Common myeloid progenitor, CD34-positive (primary cell): ENCODE measurements at regions of chr3 and their contacts with region 1.

Region 1: GRCh38 chr3:37024092-37024491 is 30.8 kb downstream of the MLH1 start:
- DNase-seq: peak; percentile 19 to 58 (median 49)
- H3K4me3 ChIP-seq: no peak overlapping the region
- H3K27ac ChIP-seq: no peak overlapping the region
- H3K4me1 ChIP-seq: peaks cover 0 to 9% (median 0%) of the 10 kb centered on the region in 4 experiments
- H3K27me3 ChIP-seq: no peaks in the 10 kb centered on the region

Region 2: DNA sequence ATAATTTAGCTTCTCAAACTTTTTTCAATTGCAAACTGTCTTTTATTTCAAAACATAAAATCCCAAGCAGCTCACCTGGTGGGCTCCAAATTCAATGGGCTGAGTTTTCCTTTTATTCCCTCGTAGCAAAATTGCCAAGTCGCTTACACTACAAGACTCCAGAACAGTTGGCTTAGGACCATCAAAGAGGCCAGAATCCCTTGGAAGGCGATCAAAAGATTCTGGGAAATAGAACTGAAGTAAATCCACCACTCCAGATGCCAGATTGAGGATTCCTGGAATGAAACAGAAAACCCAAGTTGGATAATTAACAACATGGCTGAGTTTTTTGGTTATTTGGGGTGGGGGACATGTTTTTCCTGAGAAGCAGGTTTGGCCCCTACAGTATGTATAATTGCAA is 172.0 kb before region 1 on chr3:
- CTCF ChIA-PET with region 1: no interaction called
- POLR2A ChIA-PET with region 1: no interaction called
- DNase-seq: no peak
- H3K4me3 ChIP-seq: no peak overlapping the region
- H3K27ac ChIP-seq: no peak overlapping the region
- H3K4me1 ChIP-seq: no peaks in the 10 kb centered on the region
- H3K27me3 ChIP-seq: no peaks in the 10 kb centered on the region

Region 3: DNA sequence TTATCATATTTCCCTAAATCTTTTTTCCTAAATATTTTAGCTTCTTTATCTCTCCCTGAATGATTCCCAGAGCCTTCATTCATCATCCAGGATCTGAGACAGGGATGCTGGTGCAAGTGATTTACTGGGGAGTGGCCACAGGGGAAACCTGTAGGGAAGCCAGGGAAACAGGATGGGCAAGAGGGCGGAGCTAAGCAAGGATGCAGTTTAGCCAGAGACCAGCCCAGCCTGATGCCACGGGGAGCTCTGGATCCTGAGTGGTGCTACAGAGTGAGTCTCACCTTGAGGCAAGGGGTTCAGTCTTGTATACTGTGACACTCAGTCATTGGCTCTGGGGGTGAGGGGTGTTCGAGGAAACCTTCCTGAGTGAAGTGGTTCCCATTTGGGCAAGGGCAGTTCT is 190.0 kb after region 1 on chr3:
- CTCF ChIA-PET with region 1: interaction called, 12 read pairs
- POLR2A ChIA-PET with region 1: no interaction called
- DNase-seq: no peak
- H3K4me3 ChIP-seq: no peak overlapping the region
- H3K27ac ChIP-seq: no peak overlapping the region
- H3K4me1 ChIP-seq: no peaks in the 10 kb centered on the region
- H3K27me3 ChIP-seq: no peaks in the 10 kb centered on the region